AG04449 (cell line): ENCODE measurements at regions of chr2 and their contacts with region 1.

Region 1: DNA sequence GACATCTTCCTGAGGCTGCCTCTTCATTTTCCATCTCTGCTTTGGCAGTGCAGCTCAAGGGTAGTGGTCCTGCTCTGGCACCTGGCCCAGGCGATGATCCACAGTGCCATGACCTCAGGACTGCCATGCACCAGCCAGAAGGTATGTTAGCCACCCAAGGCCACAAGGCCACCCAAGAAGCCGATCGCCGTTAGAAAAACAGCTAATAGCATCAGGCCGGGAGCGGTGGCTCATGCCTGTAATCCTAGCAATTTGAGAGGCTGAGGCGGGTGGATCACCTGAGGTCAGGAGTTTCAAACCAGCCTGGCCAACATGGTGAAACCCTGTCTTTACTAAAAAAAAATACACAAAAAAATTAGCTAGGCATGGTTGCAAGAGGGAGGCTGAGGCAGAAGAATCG is 28.4 kb upstream of the UGGT1 start:
- DNase-seq: no peak
- H3K4me3 ChIP-seq: no peak overlapping the region
- CTCF ChIP-seq: no peak

Region 2: DNA sequence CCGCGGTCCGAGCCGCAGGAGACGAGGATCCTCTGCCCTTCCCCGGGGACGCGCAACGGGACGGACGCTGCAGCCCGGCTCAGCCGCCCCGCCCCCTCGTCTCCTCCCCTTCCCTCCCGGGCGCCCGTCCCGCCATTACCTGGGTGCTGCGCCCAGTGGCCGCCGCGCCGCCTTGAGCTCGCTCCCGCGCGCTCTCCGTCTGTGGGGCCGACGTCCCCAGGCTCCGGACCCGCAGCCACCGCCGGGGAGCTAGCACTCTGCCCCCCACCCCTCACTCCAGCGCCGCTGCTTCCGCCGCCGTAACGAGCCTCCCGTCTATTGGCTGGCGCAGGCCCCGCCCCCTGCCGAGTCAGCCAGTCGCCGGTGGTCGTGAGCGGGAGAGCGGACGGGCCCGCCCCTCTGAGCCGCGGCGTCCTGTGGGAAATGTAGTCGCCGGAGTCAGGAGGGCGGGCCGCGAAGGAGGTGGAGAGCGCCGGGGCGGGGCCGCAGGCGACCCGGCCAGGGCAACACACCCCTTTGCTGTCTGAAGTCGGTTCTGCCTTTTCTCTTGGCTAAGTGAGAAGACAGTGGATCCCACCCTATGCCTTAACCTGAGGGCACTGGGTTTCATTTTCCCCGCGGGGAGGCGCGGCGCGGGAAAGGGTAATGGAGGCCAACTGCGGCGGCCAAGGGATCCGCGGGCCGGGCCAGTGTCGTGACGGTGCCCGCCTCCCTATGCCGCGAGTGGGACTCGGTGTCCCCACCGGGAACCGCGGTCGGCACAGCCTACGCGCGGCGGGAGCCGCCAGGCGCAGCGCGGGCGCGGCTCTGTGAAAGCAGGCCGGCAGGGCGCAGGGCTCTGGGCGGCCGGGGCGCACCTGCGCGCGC is 34.5 kb before region 1 on chr2 and contains the start of gene SAP130:
- CTCF ChIA-PET with region 1: interaction called, 12 read pairs
- POLR2A ChIA-PET with region 1: no interaction called
- DNase-seq: peak; percentile 40
- H3K4me3 ChIP-seq: peak within 1 kb of the TSS; percentile 97
- CTCF ChIP-seq: no peak

Region 3: GRCh38 chr2:128073278-128073677 is 10.7 kb after region 1 on chr2:
- CTCF ChIA-PET with region 1: interaction called, 22 read pairs
- POLR2A ChIA-PET with region 1: no interaction called
- DNase-seq: no peak
- H3K4me3 ChIP-seq: no peak overlapping the region
- CTCF ChIP-seq: no peak

Region 4: GRCh38 chr2:128232965-128233789 is 170.6 kb after region 1 on chr2:
- CTCF ChIA-PET with region 1: no interaction called
- POLR2A ChIA-PET with region 1: no interaction called
- DNase-seq: no peak
- H3K4me3 ChIP-seq: peak overlapping the region; percentile 69
- CTCF ChIP-seq: peak; percentile 100

Region 5: DNA sequence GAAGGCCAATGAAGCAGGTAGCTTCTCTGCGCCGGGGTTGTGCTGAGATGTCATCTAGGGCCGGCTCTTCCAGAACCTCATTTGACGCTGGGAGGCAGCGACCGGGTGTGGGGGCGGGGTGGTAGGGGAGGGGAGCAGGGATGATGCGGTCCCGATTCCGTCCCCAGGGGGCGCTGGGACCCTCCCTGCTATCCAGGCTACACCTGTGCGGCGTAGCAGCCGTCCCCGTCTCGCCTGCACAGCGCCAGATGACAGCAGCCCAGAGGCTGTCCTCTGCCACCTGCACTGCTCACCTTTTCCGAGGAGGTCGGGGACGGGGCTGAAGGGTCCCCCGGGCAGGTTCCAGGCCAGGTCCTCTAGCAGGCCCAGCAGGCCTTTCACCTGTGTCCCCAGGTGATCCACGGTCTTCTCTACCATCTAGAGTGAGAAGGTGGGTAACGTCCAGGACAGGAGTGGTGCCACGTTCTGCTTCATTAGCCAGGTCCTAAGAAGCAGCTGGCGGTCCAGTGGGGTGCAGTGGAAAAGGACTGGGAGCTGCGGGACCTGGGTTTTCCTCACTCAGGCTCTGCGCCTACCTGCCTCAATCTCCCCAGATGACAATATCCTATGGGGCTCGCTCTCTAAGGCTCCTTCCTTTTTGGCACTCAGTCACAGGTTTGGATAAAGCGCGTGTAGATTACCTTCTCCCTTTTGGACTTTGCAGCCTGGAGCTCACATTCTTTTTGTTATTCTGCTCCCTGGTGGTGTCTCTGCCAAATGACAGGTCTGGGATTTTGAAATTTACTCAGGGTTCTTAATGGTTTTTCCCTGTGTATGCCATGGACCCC is 1860.9 kb after region 1 on chr2:
- CTCF ChIA-PET with region 1: interaction called, 12 read pairs
- POLR2A ChIA-PET with region 1: no interaction called
- DNase-seq: no peak
- H3K4me3 ChIP-seq: no peak overlapping the region
- CTCF ChIP-seq: peak; percentile 31